ENCODE measurements at regions of chr10 and their contacts with region 1.

Region 1: DNA sequence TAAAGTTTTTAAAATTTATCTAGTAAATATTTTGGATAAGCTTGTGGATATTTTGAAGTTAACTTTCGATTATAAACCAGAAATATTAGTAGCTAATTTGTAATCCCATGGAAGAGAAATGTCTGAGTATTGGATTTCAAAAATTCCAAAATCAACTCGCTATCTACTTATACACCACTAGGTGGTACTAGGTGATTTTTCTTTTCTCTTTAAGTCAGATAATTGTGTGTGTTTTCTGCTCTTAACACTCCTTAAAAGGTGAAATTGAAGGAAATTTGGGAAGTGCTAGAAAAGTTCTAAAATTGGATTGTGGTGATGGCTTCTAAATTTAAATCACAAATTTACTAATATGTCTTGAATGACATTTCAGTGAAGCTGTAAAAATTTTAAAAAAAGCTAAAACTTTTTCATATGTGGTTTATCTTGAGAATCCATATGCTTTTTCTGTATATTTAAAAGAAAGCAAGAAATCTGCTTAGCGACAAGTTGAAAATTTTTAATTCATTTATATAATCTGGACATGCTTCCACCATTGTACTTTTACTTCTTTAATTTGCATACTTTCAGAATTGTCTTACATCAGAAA is 90.2 kb downstream of the IPMK start:
- H3K4me3 Mint-ChIP-seq: no peak overlapping the region
- H3K27ac Mint-ChIP-seq: no peak overlapping the region
- H3K4me1 Mint-ChIP-seq: peaks cover 9% of the 10 kb centered on the region
- H3K27me3 Mint-ChIP-seq: no peaks in the 10 kb centered on the region

Region 2: GRCh38 chr10:58291538-58292174 is 114.2 kb after region 1 on chr10:
- intact Hi-C with region 1: loop called (anchors 1 kb)
- H3K4me3 Mint-ChIP-seq: no peak overlapping the region
- H3K27ac Mint-ChIP-seq: no peak overlapping the region
- H3K4me1 Mint-ChIP-seq: no peaks in the 10 kb centered on the region
- H3K27me3 Mint-ChIP-seq: no peaks in the 10 kb centered on the region

Region 3: DNA sequence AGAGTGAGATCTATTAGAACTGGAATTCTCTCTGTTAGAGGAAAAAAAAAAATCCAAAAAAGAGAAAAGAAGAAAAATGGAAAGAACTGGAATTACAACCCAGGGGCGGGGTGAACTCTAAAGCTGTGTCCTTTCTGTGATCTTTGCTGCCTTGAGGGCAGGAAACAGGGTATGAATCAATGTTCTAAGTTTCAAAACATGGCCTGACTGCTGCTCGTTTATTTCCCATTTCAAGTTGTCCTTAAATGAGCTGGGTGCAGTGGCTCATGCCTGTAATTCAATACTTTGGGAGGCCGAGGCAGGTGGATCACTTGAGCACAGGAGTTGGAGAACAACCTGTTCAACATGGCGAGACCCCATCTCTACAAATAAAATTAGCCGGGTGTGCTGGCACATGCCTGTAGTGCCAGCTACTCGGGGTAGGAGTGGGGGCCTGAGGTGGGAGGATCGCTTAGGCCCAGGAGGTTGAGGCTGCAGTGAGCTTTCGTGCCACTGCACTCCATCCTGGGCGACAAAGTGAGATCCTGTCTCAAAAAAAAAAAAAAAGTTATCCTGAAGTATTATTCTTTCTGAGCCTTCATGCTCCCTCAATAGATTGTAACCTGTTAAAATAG is 183.0 kb after region 1 on chr10:
- intact Hi-C with region 1: no loop called
- H3K4me3 Mint-ChIP-seq: no peak overlapping the region
- H3K27ac Mint-ChIP-seq: no peak overlapping the region
- H3K4me1 Mint-ChIP-seq: peaks cover 35% of the 10 kb centered on the region
- H3K27me3 Mint-ChIP-seq: no peaks in the 10 kb centered on the region

Region 4: DNA sequence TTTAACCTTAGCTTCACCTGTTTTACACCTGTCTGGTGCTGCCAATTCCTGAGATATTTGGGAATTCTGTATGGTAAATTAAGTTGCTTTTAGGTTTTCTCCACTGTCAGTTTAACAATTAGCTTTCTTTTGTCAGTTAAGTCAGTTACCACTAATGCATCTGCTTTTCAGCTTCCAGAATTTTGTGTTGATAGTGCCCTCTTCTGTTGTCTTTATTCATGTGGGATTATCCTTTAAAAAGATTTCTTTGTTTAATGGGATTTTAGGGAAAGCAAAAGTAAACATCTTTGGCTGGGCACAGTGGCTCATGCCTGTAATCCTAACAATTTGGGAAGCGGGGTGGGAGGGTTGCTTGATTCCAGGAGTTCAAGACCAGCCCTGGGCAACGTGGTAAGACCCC is 215.9 kb after region 1 on chr10:
- intact Hi-C with region 1: loop called (anchors 10 kb)
- H3K4me3 Mint-ChIP-seq: no peak overlapping the region
- H3K27ac Mint-ChIP-seq: no peak overlapping the region
- H3K4me1 Mint-ChIP-seq: peaks cover 5% of the 10 kb centered on the region
- H3K27me3 Mint-ChIP-seq: no peaks in the 10 kb centered on the region

Measured in dendritic cell treated with granulocyte-macrophage colony-stimulating factor and Interleukin-4, amounts not matched to agents 40 ng/mL and 50 ng/mL, for 4 days (primary cell).